Tibial artery (tissue), 4 donors: ENCODE measurements at regions of chr1 and their contacts with region 1.

Region 1: GRCh38 chr1:68197891-68198290 is 34.4 kb downstream of the WLS start:
- DNase-seq: no peak
- H3K4me3 ChIP-seq: no peak overlapping the region
- H3K27ac ChIP-seq: peak overlapping the region; percentile 40 to 71
- H3K4me1 ChIP-seq: peaks cover 0 to 46% (median 11%) of the 10 kb centered on the region in 4 donors
- H3K27me3 ChIP-seq: no peaks in the 10 kb centered on the region
- CTCF ChIP-seq: no peak

Region 2: DNA sequence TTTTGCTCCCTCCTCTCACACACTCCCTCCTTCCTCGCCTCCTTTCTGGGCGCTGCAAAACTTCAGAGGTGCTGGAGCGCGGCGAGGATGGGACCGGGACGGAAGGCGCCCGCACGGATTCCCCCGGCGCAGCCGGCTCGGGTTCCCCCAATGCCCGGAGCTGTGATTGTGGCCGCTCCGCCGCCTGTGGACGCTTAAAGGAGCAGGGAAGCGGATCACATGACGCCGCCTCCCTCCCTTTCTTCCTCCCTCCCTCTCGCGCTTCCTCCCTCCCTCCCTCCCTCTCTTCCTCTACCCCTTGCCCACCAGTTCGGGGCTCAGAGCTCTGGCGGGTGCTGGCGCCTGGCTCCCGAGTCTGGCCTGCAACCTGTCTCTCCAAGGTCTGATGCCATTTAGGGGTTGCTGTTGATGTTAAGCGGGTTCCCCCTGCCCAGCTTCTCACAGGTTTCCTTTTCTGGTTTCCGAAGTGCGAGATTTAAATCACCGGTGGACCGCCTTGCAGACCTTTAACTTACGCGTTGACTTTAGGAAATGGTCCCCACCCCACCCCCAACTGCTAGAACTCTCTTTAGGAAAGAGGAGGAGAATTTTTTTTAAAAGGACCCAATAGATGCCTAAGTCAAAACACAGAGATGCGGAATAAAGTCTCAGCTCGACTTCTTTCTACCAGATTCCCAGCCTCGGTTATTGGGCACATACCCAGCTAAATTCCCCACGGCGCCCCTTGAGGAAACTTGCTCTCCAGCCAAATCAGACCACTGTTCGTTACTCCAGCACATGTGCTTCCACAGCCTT is 34.7 kb after region 1 on chr1 and contains the start of gene WLS:
- intact Hi-C with region 1: loop called (anchors 5 kb)
- DNase-seq: peak; percentile 80 to 90
- H3K4me3 ChIP-seq: peak within 1 kb of the TSS; percentile 64 to 84
- H3K27ac ChIP-seq: peak within 1 kb of the TSS; percentile 74 to 88
- H3K4me1 ChIP-seq: peaks cover 0 to 36% (median 12%) of the 10 kb centered on the region in 4 donors
- H3K27me3 ChIP-seq: no peaks in the 10 kb centered on the region
- CTCF ChIP-seq: no peak